ENCODE measurements at regions of chr16 and their contacts with region 1.

Region 1: GRCh38 chr16:2905431-2906387 is 6.0 kb upstream of the FLYWCH1 start:
- DNase-seq: peak; percentile 99
- ATAC-seq: peak; percentile 89

Region 2: GRCh38 chr16:2603165-2604015 is 302.3 kb before region 1 on chr16:
- intact Hi-C with region 1: no loop called
- DNase-seq: peak; percentile 96
- ATAC-seq: peak; percentile 94

Region 3: GRCh38 chr16:2883027-2883851 is 22.5 kb before region 1 on chr16 and contains the start of gene FLYWCH2:
- intact Hi-C with region 1: loop called (anchors 2 kb)
- DNase-seq: peak; percentile 99
- ATAC-seq: peak; percentile 92
- total RNA-seq, gene FLYWCH2: 27.9 TPM